Activated CD4-positive, alpha-beta T cell treated with anti-CD3 and anti-CD28 coated beads for 36 hours (primary cell): ENCODE measurements at regions of chr3 and their contacts with region 1.

Region 1: DNA sequence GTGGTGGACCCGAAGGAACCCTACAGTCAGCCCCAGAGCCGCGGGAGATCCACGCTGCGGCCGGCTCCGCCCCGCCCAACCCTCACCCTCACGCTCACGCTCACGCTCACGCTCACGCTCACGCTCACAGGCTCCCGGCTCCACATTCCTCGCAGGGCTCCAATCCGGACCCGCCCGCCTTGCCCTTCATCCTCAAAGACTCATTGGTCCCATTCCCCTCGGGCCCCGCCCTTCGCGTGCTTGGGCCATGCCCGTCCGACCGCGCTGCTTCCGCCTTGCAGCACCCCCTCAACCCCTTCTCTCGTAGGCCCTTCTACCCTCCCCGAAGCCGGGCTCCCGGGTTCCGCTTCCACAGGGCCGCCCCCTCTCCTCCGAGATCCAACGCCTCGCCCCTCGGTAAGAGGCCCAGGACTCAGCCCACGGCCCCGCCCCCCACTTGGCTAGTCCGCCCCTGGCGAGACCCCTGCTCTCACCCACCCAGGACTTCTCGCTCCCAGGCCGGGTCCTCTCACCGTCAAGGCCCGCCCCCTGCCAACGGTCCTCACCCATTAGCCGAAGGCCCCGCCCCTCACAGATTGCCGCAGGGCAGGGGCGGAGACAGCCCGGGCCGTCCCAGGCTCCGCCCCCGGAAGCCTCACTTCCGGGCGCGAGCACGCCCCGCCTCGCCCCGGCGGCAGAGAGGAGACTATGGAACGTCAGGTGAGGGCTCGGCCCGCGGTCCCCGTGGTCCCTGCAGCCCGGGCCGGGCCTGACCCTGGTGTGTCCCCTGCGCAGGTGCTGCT is at the start of gene APEH:
- DNase-seq: peak; percentile 99
- ATAC-seq: peak; percentile 91
- H3K4me3 Mint-ChIP-seq: peak within 1 kb of the TSS; percentile 88
- H3K27ac Mint-ChIP-seq: peak within 1 kb of the TSS; percentile 94
- H3K4me1 Mint-ChIP-seq: peaks cover 29% of the 10 kb centered on the region
- H3K27me3 Mint-ChIP-seq: no peaks in the 10 kb centered on the region
- total RNA-seq, gene APEH: 110 to 137 TPM

Region 2: GRCh38 chr3:49021813-49022687 is 651.9 kb before region 1 on chr3 and contains the start of gene NDUFAF3:
- CTCF ChIA-PET with region 1: no interaction called
- POLR2A ChIA-PET with region 1: no interaction called
- intact Hi-C with region 1: loop called in 1 of 2 experiments (anchors 1 kb)
- DNase-seq: peak; percentile 96
- ATAC-seq: peak; percentile 78
- H3K4me3 Mint-ChIP-seq: peak within 1 kb of the TSS; percentile 95
- H3K27ac Mint-ChIP-seq: peak within 1 kb of the TSS; percentile 96
- H3K4me1 Mint-ChIP-seq: peaks cover 60% of the 10 kb centered on the region
- H3K27me3 Mint-ChIP-seq: no peaks in the 10 kb centered on the region
- total RNA-seq, gene NDUFAF3: 90.8 to 108 TPM

Region 3: GRCh38 chr3:49411968-49412631 is 261.8 kb before region 1 on chr3 and contains the starts of genes RHOA and TCTA:
- CTCF ChIA-PET with region 1: no interaction called
- POLR2A ChIA-PET with region 1: no interaction called
- intact Hi-C with region 1: loop called in 1 of 2 experiments (anchors 1 kb)
- DNase-seq: peak; percentile 99
- ATAC-seq: peak; percentile 88
- H3K4me3 Mint-ChIP-seq: peak within 1 kb of the TSS; percentile 97
- H3K27ac Mint-ChIP-seq: peak within 1 kb of the TSS; percentile 97
- H3K4me1 Mint-ChIP-seq: peaks cover 63% of the 10 kb centered on the region
- H3K27me3 Mint-ChIP-seq: no peaks in the 10 kb centered on the region
- total RNA-seq, gene RHOA: 438 to 449 TPM
- total RNA-seq, gene TCTA: 9.4 TPM

Region 4: GRCh38 chr3:49602877-49603411 is 71.0 kb before region 1 on chr3:
- CTCF ChIA-PET with region 1: no interaction called
- POLR2A ChIA-PET with region 1: no interaction called
- intact Hi-C with region 1: loop called in 1 of 2 experiments (anchors 1 kb)
- DNase-seq: peak; percentile 74
- ATAC-seq: peak; percentile 92
- H3K4me3 Mint-ChIP-seq: no peak overlapping the region
- H3K27ac Mint-ChIP-seq: peak overlapping the region; percentile 66
- H3K4me1 Mint-ChIP-seq: peaks cover 16% of the 10 kb centered on the region
- H3K27me3 Mint-ChIP-seq: no peaks in the 10 kb centered on the region

Region 5: DNA sequence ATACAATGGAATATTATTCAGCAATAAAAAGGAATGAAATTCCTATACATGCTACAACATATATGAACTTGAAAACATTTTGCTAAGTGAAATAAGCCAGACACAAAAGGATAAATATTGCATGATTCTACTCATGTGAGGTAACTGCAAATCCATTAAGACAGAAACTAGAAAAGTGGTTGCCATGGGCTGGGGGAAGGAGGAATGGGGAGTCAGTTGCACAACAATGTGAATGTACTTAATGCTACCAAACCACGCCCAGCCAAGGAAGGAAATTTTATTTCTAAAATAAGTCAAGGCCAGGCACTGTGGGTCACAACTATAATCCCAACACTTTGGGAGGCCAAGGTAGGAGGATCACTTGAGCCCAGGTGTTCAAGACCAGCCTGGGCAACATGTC is 59.6 kb after region 1 on chr3:
- CTCF ChIA-PET with region 1: no interaction called
- POLR2A ChIA-PET with region 1: no interaction called
- intact Hi-C with region 1: no loop called
- DNase-seq: no peak
- ATAC-seq: no peak
- H3K4me3 Mint-ChIP-seq: no peak overlapping the region
- H3K27ac Mint-ChIP-seq: no peak overlapping the region
- H3K4me1 Mint-ChIP-seq: peaks cover under 1% of the 10 kb centered on the region
- H3K27me3 Mint-ChIP-seq: no peaks in the 10 kb centered on the region

Region 6: GRCh38 chr3:49856181-49857005 is 182.5 kb after region 1 on chr3 and contains the start of gene TRAIP:
- CTCF ChIA-PET with region 1: no interaction called
- POLR2A ChIA-PET with region 1: no interaction called
- intact Hi-C with region 1: loop called in 1 of 2 experiments (anchors 1 kb)
- DNase-seq: peak; percentile 97
- ATAC-seq: peak; percentile 99
- H3K4me3 Mint-ChIP-seq: peak within 1 kb of the TSS; percentile 97
- H3K27ac Mint-ChIP-seq: peak within 1 kb of the TSS; percentile 81
- H3K4me1 Mint-ChIP-seq: peaks cover 10% of the 10 kb centered on the region
- H3K27me3 Mint-ChIP-seq: no peaks in the 10 kb centered on the region
- total RNA-seq, gene TRAIP: 25.1 to 28.1 TPM

Region 7: DNA sequence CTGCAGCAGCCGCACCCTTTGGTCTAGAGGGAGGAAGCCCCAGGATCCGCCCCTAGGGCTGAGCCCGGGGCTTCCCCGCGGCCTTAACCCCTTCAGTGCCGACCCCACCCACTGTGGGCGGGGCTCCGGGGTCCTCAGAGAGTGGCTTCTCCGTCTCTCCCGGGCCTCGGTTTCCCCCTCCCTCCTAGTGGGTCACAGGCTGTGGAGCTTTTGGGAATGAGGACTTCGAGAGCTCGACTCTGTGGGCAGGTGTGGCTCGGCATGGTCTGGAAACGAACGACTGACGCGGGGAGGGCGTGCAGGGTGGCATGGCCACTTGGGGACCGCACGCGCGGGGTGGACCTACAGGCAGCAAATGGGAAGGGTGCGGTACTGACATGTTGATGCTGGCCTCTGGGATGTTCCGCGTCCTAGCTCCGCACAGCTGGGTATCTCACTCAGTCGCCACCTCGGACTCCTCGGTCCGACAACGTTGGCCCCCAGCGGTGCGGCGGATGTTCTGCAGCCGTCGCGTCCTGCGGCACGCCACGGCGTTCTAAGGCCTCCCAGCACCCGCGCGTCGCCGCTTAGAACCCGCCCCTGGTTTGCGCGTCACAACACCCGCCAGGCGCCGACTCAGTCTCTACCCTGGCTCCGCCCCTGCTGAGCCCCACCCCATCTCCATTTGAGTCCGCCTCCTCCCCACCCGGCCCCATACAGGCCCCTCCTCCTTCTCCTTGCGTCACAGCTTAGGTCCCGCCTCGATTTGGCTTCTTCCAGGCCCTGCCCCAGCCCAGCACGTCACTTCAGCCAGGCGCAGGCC is 625.1 kb after region 1 on chr3 and contains the starts of genes HYAL3 and NAA80:
- CTCF ChIA-PET with region 1: no interaction called
- POLR2A ChIA-PET with region 1: no interaction called
- intact Hi-C with region 1: loop called in 1 of 2 experiments (anchors 2 kb)
- DNase-seq: peak; percentile 100
- ATAC-seq: peak; percentile 89
- H3K4me3 Mint-ChIP-seq: peak within 1 kb of the TSS; percentile 97
- H3K27ac Mint-ChIP-seq: peak within 1 kb of the TSS; percentile 96
- H3K4me1 Mint-ChIP-seq: peaks cover 13% of the 10 kb centered on the region
- H3K27me3 Mint-ChIP-seq: no peaks in the 10 kb centered on the region
- total RNA-seq, gene HYAL3: 4.5 to 5.4 TPM
- total RNA-seq, gene NAA80: 17.6 to 18.7 TPM